Tibial artery (tissue), 4 donors: ENCODE measurements at regions of chr6 and their contacts with region 1.

Region 1: GRCh38 chr6:134640975-134641429 is 308.9 kb downstream of the ALDH8A1 start:
- DNase-seq: peak; percentile 90 to 91
- H3K4me3 ChIP-seq: no peak overlapping the region
- H3K27ac ChIP-seq: no peak overlapping the region
- H3K4me1 ChIP-seq: no peaks in the 10 kb centered on the region
- H3K27me3 ChIP-seq: no peaks in the 10 kb centered on the region
- CTCF ChIP-seq: peak; percentile 89 to 95

Region 2: GRCh38 chr6:134822920-134823709 is 182.1 kb after region 1 on chr6:
- intact Hi-C with region 1: loop called (anchors 10 kb)
- DNase-seq: no peak
- H3K4me3 ChIP-seq: no peak overlapping the region
- H3K27ac ChIP-seq: no peak overlapping the region
- H3K4me1 ChIP-seq: peaks cover 0 to 23% (median 15%) of the 10 kb centered on the region in 4 donors
- H3K27me3 ChIP-seq: no peaks in the 10 kb centered on the region
- CTCF ChIP-seq: peak; percentile 87 to 91